CD8-positive, alpha-beta memory T cell (primary cell): ENCODE measurements at regions of chr18 and their contacts with region 1.

Region 1: GRCh38 chr18:4106407-4107033 is 348.6 kb downstream of the DLGAP1 start:
- DNase-seq: peak in 4 of 5 donors; percentile 6 to 57 (median 27)
- H3K4me3 ChIP-seq: no peak overlapping the region
- H3K4me3 Mint-ChIP-seq: no peak overlapping the region
- H3K27ac ChIP-seq: no peak overlapping the region
- H3K27ac Mint-ChIP-seq: no peak overlapping the region
- H3K4me1 ChIP-seq: no peaks in the 10 kb centered on the region
- H3K4me1 Mint-ChIP-seq: no peaks in the 10 kb centered on the region
- H3K27me3 ChIP-seq: peaks cover 3% of the 10 kb centered on the region
- H3K27me3 Mint-ChIP-seq: peaks cover 0 to 4% of the 10 kb centered on the region in 2 donors

Region 2: DNA sequence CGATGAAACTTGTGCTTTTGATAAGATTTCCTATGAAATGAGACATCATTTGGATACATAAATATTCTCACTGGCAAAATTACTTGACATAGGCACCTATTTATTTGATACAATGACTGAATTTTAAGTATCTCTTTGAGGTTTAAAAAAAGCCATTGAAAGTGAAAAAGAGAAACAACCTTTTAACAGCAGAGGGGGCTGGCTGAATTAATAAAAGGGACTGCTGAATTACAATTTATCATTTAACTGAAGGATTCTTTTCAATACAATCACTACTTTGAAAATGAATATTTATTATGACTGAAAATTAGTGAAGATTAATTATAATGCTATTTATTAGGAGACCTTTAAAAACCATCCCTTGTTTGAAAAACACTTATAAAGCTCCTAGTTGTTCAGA is 13.3 kb after region 1 on chr18:
- CTCF ChIA-PET with region 1: no interaction called
- POLR2A ChIA-PET with region 1: no interaction called
- DNase-seq: no peak
- H3K4me3 ChIP-seq: no peak overlapping the region
- H3K4me3 Mint-ChIP-seq: no peak overlapping the region
- H3K27ac ChIP-seq: no peak overlapping the region
- H3K27ac Mint-ChIP-seq: no peak overlapping the region
- H3K4me1 ChIP-seq: no peaks in the 10 kb centered on the region
- H3K4me1 Mint-ChIP-seq: no peaks in the 10 kb centered on the region
- H3K27me3 ChIP-seq: no peaks in the 10 kb centered on the region
- H3K27me3 Mint-ChIP-seq: peaks cover 4 to 8% of the 10 kb centered on the region in 2 donors

Region 3: GRCh38 chr18:4157352-4157751 is 50.8 kb after region 1 on chr18:
- CTCF ChIA-PET with region 1: no interaction called
- POLR2A ChIA-PET with region 1: no interaction called
- DNase-seq: no peak
- H3K4me3 ChIP-seq: no peak overlapping the region
- H3K4me3 Mint-ChIP-seq: no peak overlapping the region
- H3K27ac ChIP-seq: no peak overlapping the region
- H3K27ac Mint-ChIP-seq: no peak overlapping the region
- H3K4me1 ChIP-seq: no peaks in the 10 kb centered on the region
- H3K4me1 Mint-ChIP-seq: no peaks in the 10 kb centered on the region
- H3K27me3 ChIP-seq: no peaks in the 10 kb centered on the region
- H3K27me3 Mint-ChIP-seq: peaks cover 0 to 1% of the 10 kb centered on the region in 2 donors

Region 4: GRCh38 chr18:4251873-4252272 is 145.4 kb after region 1 on chr18:
- CTCF ChIA-PET with region 1: no interaction called
- POLR2A ChIA-PET with region 1: no interaction called
- DNase-seq: no peak
- H3K4me3 ChIP-seq: no peak overlapping the region
- H3K4me3 Mint-ChIP-seq: no peak overlapping the region
- H3K27ac ChIP-seq: no peak overlapping the region
- H3K27ac Mint-ChIP-seq: no peak overlapping the region
- H3K4me1 ChIP-seq: no peaks in the 10 kb centered on the region
- H3K4me1 Mint-ChIP-seq: no peaks in the 10 kb centered on the region
- H3K27me3 ChIP-seq: no peaks in the 10 kb centered on the region
- H3K27me3 Mint-ChIP-seq: no peaks in the 10 kb centered on the region

Region 5: GRCh38 chr18:5057386-5058348 is 951.1 kb after region 1 on chr18:
- CTCF ChIA-PET with region 1: interaction called, 12 read pairs
- POLR2A ChIA-PET with region 1: no interaction called
- DNase-seq: peak in 3 of 5 donors; percentile 3 to 51 (median 8)
- H3K4me3 ChIP-seq: no peak overlapping the region
- H3K4me3 Mint-ChIP-seq: no peak overlapping the region
- H3K27ac ChIP-seq: no peak overlapping the region
- H3K27ac Mint-ChIP-seq: peak overlapping the region in 3 of 8 donors; percentile 7 to 78 (median 67)
- H3K4me1 ChIP-seq: peaks cover 12% of the 10 kb centered on the region
- H3K4me1 Mint-ChIP-seq: peaks cover 18 to 19% (median 18%) of the 10 kb centered on the region in 3 donors
- H3K27me3 ChIP-seq: no peaks in the 10 kb centered on the region
- H3K27me3 Mint-ChIP-seq: peaks cover 9% of the 10 kb centered on the region in 2 donors